ENCODE measurements at regions of chr5 and their contacts with region 1.

Region 1: DNA sequence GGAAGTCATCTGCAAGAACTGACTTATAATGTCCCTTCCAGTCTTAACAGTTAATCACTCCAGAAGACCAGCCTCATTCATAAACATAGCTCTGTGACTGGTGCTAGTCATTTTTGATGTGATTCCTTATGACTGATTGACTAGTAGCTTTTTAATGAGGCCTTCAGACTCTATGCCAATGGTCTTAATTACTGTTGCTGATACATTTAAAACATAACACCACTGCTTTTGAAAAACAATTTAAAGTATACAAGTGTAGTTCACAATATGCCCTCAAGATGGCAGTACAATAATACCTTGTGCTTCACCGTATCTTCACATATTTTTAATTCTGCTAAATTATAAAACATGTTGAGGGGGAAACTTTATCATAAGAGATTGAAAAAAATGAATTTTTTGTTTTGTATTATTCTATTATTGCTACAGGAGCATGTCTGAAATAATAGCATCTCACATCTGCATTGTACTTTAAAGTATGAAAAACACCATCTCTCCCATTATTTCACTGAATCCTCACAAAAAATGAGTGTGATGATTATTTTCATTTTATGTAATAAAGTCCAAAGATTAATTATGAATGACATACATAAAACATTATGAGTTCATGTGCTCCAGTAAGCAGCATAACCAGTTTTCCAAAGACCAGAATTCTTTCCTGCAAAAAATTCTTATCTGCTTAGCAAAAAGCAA is 55.2 kb upstream of the SHISAL2B start:
- H3K4me3 ChIP-seq: no peak overlapping the region
- H3K27ac ChIP-seq: no peak overlapping the region
- H3K4me1 ChIP-seq: peaks cover 6% of the 10 kb centered on the region
- CTCF ChIP-seq: peak; percentile 31; the same call in 1 of the 2 replicates

Region 2: DNA sequence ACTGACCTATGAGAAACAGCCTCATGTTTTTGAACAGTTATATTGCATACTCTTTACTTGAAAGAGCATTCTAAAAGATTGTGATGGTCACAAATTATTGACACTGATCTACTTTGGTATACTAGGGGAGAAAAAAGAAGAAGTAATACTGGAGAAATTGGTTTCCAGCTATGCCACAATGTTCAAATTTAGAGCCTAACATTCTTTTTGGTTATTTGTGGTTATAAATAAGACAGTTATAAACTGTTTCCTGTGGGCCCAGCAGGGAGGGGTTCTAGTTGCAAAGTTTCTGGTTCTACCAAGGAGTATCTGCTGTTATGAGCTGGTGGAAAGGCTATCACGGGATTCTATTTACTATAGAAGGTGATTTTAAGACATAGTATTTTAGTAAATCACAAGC is 138.4 kb after region 1 on chr5:
- CTCF ChIA-PET with region 1: interaction called, 12 read pairs
- POLR2A ChIA-PET with region 1: no interaction called
- H3K4me3 ChIP-seq: no peak overlapping the region
- H3K27ac ChIP-seq: no peak overlapping the region
- H3K4me1 ChIP-seq: no peaks in the 10 kb centered on the region
- CTCF ChIP-seq: no peak

Region 3: GRCh38 chr5:64784451-64785025 is 149.4 kb after region 1 on chr5:
- CTCF ChIA-PET with region 1: interaction called, 72 read pairs
- POLR2A ChIA-PET with region 1: no interaction called
- H3K4me3 ChIP-seq: no peak overlapping the region
- H3K27ac ChIP-seq: no peak overlapping the region
- H3K4me1 ChIP-seq: no peaks in the 10 kb centered on the region
- CTCF ChIP-seq: no peak; the same call in none of the 2 replicates